ENCODE measurements at regions of chr13 and their contacts with region 1.

Region 1: GRCh38 chr13:21557995-21558394 is 46.0 kb downstream of the MICU2 start:
- DNase-seq: peak; percentile 7
- H3K4me3 ChIP-seq: no peak overlapping the region
- H3K27ac ChIP-seq: no peak overlapping the region
- H3K4me1 ChIP-seq: no peaks in the 10 kb centered on the region
- H3K27me3 ChIP-seq: no peaks in the 10 kb centered on the region
- CTCF ChIP-seq: peak; percentile 36 to 54
- POLR2A ChIP-seq: no peak

Region 2: GRCh38 chr13:21576426-21576825 is 18.4 kb after region 1 on chr13:
- CTCF ChIA-PET with region 1: interaction called, 10 read pairs
- POLR2A ChIA-PET with region 1: no interaction called
- dilution Hi-C with region 1: no loop called
- intact Hi-C with region 1: no loop called
- DNase-seq: peak; percentile 7
- H3K4me3 ChIP-seq: no peak overlapping the region
- H3K27ac ChIP-seq: no peak overlapping the region
- H3K4me1 ChIP-seq: peaks cover 9% of the 10 kb centered on the region
- H3K27me3 ChIP-seq: no peaks in the 10 kb centered on the region
- CTCF ChIP-seq: no peak
- POLR2A ChIP-seq: no peak

Region 3: DNA sequence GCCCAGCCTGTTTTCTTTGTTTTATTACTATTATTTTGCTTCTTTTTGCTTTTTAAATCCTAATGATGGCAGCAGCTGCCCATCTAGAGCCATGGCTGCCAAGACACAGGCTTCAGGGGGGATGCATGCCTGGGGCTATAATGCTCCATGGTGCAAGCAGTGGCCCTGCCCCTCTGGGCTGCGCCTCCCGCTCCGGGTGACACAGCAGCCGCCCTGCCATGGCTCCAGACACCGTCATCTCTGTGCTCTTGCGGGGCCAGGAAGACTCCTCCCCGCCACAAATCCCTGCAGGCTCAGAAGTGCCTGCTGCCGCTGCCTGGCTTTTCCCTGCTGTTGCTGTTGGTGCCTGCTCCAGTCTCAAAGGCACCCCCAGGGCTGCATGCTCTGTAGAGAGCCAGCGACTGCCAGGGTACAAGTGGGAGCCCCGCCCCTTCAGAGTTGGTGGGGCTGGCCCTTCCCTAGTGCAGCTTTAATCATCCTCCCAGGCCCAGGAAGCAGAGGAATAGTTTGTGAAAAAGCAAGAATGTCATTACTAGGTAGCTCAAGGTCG is 694.4 kb after region 1 on chr13:
- CTCF ChIA-PET with region 1: no interaction called
- POLR2A ChIA-PET with region 1: no interaction called
- dilution Hi-C with region 1: no loop called
- intact Hi-C with region 1: no loop called
- DNase-seq: no peak
- H3K4me3 ChIP-seq: no peak overlapping the region
- H3K27ac ChIP-seq: no peak overlapping the region
- H3K4me1 ChIP-seq: no peaks in the 10 kb centered on the region
- H3K27me3 ChIP-seq: no peaks in the 10 kb centered on the region
- CTCF ChIP-seq: no peak
- POLR2A ChIP-seq: no peak

Measured in endothelial cell of umbilical vein (primary cell).